PC-9 (cell line): ENCODE measurements at regions of chr1 and their contacts with region 1.

Region 1: GRCh38 chr1:147581459-147581858 is 40.2 kb downstream of the BCL9 start:
- DNase-seq: no peak
- H3K4me3 ChIP-seq: no peak overlapping the region
- H3K27ac ChIP-seq: no peak overlapping the region
- H3K4me1 ChIP-seq: no peaks in the 10 kb centered on the region
- H3K27me3 ChIP-seq: no peaks in the 10 kb centered on the region
- CTCF ChIP-seq: no peak

Region 2: GRCh38 chr1:147545133-147545532 is 36.3 kb before region 1 on chr1:
- CTCF ChIA-PET with region 1: no interaction called
- POLR2A ChIA-PET with region 1: interaction called, 14 read pairs
- intact Hi-C with region 1: no loop called
- DNase-seq: peak; percentile 83 to 96
- H3K4me3 ChIP-seq: no peak overlapping the region
- H3K27ac ChIP-seq: peak overlapping the region; percentile 56
- H3K4me1 ChIP-seq: peaks cover 44% of the 10 kb centered on the region
- H3K27me3 ChIP-seq: no peaks in the 10 kb centered on the region
- CTCF ChIP-seq: no peak

Region 3: DNA sequence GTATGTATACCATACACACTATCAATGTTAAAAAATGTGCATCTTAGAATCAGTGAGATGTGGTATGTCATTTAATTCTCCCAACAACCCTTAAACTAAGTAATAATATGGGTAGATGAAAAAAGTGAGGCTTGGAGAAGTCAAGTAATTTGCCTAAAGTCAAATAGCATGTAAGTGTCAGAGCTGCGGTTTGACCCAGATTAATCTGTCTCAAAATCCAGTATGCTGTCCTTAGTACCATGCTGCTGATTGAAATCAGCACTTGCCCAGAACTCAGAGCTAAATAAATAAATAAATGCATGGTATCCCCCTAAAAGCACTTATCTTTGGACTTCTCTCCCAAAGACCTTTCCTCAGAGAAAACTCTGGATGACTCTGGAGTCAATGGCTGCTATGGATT is 23.4 kb before region 1 on chr1:
- CTCF ChIA-PET with region 1: no interaction called
- POLR2A ChIA-PET with region 1: no interaction called
- intact Hi-C with region 1: no loop called
- DNase-seq: no peak
- H3K4me3 ChIP-seq: no peak overlapping the region
- H3K27ac ChIP-seq: no peak overlapping the region
- H3K4me1 ChIP-seq: peaks cover 5% of the 10 kb centered on the region
- H3K27me3 ChIP-seq: no peaks in the 10 kb centered on the region
- CTCF ChIP-seq: no peak